A673 (cell line): ENCODE measurements at regions of chrX and their contacts with region 1.

Region 1: DNA sequence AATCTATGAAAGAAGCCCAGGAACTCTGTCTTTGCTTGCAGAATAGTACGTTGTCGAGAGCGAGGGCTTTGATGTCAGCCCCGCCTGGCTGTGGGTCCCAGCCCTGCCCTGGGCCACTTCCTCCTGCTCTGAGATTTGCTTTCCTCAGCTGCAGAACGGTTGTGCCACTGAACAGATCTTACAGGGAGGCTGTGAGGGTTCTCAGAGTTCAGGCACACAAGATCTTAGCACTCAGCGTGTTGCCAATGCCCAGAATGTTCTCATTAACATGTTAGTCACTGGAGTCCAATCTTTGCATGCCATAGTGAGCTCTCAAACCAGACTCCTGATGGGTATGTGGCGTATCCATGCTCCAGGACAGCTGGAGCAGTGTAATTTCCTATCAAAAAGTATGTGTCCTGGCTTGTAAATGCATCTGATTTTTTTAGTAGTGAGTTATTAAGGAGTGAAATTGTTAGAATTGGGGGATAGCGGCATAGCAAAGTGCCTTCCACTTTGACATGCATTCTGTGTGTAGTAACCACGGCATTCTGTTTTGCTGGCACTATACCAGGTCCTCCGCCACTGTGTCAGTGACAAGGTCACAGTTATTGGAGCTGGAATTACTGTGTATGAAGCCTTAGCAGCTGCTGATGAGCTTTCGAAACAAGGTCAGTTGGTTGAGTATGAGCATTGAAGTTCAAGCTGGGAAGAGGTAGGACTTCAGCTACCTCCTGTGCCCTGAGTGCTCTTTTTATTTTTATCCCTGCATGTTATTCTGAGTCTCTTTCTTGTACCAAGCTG is 31.6 kb downstream of the TKTL1 start:
- DNase-seq: no peak
- H3K4me3 ChIP-seq: no peak overlapping the region
- H3K27ac ChIP-seq: no peak overlapping the region
- H3K4me1 ChIP-seq: no peaks in the 10 kb centered on the region
- H3K27me3 ChIP-seq: peaks cover 23% of the 10 kb centered on the region
- CTCF ChIP-seq: no peak

Region 2: GRCh38 chrX:154136627-154137161 is 190.5 kb before region 1 on chrX:
- CTCF ChIA-PET with region 1: no interaction called
- POLR2A ChIA-PET with region 1: no interaction called
- intact Hi-C with region 1: no loop called
- DNase-seq: peak; percentile 66
- H3K4me3 ChIP-seq: no peak overlapping the region
- H3K27ac ChIP-seq: no peak overlapping the region
- H3K4me1 ChIP-seq: no peaks in the 10 kb centered on the region
- H3K27me3 ChIP-seq: no peaks in the 10 kb centered on the region
- CTCF ChIP-seq: peak; percentile 79

Region 3: DNA sequence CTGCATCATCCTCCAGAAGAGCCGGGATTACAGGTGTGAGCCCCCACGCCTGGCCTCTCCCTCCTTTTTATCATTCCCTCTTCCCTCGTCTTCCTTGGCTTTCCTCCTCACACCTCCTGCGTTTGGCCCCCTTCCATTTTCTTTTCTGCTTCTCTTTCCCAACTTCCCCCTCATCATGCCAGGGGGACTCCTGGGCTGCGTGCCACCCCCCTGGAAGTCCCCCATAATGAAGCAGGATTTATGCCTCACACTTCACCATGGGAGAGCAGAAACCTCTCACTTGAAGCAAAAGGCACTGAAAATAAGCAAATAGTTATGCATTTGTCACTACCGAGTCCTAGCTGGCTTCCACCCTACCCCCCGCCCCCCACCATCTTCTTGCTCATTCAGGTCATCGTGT is 23.8 kb before region 1 on chrX:
- CTCF ChIA-PET with region 1: interaction called, 10 read pairs
- POLR2A ChIA-PET with region 1: no interaction called
- intact Hi-C with region 1: no loop called
- DNase-seq: no peak
- H3K4me3 ChIP-seq: no peak overlapping the region
- H3K27ac ChIP-seq: no peak overlapping the region
- H3K4me1 ChIP-seq: no peaks in the 10 kb centered on the region
- H3K27me3 ChIP-seq: no peaks in the 10 kb centered on the region
- CTCF ChIP-seq: no peak

Region 4: DNA sequence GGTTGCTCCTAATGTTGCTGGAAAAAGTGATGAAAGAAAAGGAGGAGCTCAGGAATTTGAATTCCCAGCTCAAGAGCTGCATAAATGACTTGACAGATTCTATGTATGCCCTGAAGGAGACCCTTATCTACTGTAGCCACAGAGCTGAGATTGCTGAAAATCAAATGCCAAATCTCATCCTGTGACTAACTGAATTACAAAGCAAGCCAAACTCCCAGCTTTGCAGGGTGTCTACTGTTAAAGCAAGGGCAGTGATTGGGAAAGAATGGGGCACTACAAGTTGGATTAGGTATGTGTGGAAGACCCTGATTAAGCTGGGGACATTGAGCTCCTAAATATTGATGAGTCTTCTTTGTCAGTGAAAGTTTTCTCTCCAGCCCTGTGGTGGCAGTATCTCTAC is 528.0 kb after region 1 on chrX:
- CTCF ChIA-PET with region 1: no interaction called
- POLR2A ChIA-PET with region 1: no interaction called
- intact Hi-C with region 1: no loop called
- DNase-seq: no peak
- H3K4me3 ChIP-seq: no peak overlapping the region
- H3K27ac ChIP-seq: no peak overlapping the region
- H3K4me1 ChIP-seq: no peaks in the 10 kb centered on the region
- H3K27me3 ChIP-seq: no peaks in the 10 kb centered on the region
- CTCF ChIP-seq: no peak